Activated naive CD8-positive, alpha-beta T cell treated with anti-CD3 and anti-CD28 coated beads, Interleukin-2, amount 10 ng/mL, durations not matched to agents 7 days and 5 days (primary cell): ENCODE measurements at regions of chr16 and their contacts with region 1.

Region 1: DNA sequence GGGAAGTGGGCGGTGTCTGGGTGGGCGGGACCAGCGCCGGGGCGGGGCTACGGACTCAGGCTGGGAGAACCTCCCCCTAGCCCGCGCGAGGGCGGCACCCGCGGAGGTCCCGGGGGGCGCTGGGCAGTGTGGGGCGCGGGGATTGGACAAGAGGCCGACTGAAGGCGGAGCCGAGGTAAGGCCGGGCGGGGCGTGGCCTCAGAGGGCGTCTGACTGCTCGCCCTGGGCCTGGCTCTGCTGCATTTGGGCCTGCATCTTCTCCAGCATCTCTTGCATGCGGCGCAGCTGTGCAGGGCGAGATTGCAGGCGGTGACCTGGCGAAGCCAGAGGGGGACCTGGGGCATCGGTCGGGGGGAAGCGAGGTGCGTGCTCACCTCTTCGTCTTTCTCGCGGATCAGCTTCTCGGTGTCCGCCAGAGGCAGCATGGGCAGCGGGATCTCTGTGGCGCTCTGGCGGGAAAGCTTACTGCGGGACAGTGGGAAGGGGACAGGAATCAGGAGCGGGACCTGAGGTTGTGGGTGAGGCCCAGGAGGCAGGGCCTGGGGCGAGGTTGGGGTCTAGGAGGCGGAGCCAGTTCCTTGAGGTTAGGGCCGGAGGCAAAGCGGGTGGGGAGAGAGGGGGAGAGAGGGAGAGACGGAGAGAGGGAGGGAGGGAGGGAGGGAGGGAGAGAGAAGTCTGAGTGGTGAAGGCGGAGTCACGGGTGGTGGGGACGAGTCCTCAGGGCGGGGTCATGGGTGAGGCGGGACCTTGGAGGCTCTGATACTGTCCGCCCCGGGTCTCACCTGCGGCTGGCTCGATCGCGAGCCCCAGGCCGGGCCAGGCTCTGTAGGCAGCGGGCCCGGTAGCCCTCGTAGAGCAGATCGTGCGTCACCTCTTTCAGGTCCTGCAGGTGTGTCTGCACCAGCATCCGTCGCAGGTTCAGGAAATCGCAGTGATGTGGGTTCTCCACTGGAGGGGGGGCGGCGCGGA is 3.8 kb downstream of the SEPTIN1 start:
- DNase-seq: peak; percentile 99
- ATAC-seq: peak; percentile 80
- H3K4me3 Mint-ChIP-seq: peak overlapping the region; percentile 93
- H3K27ac Mint-ChIP-seq: peak overlapping the region; percentile 98
- H3K4me1 Mint-ChIP-seq: peaks cover 34% of the 10 kb centered on the region
- H3K27me3 Mint-ChIP-seq: no peaks in the 10 kb centered on the region

Region 2: DNA sequence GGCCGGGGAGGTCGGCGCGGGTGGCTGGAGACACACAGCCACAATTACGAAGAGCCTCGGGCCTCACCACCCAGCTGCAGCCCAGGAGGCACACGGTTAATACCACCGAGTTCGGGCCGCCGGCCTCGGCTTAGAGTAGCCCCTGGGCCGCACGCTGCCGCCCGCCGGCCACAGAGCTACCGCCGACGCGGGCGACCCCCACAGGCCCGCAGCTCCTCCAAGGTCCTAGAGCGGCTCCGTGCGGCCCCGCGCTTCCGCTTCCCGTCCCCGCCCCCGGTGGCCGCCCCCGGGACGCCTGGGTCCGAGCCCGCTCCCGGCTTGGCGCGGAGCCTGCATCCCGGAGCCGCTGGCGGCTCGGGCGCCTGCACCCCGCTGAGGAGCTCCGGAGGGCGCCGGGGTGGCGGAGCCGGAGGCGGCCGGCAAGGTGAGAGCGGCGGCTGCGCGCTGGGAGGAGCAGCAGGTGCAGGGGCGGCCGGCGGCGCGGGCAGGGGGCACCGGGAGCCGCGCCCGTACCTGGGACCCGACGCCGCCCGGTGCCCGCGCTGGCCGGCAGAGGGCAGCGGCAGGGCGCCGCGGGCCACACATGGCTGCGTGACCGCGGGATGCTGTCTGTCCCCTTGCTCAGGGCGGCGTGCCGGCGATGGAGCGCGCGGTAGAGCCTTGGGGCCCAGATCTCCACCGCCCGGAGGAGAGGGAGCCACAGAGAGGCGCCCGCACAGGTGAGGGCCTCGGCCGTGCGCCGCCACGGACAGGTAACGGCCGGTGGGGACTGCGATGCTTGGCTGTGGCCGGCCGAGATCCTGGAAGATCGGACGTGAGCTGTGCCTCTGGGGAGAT is 16.9 kb after region 1 on chr16 and contains the start of gene ZNF48:
- POLR2A ChIA-PET with region 1: interaction called, 74 read pairs
- DNase-seq: peak; percentile 79
- ATAC-seq: peak; percentile 75
- H3K4me3 Mint-ChIP-seq: peak within 1 kb of the TSS; percentile 94
- H3K27ac Mint-ChIP-seq: peak within 1 kb of the TSS; percentile 82
- H3K4me1 Mint-ChIP-seq: peaks cover 34% of the 10 kb centered on the region
- H3K27me3 Mint-ChIP-seq: no peaks in the 10 kb centered on the region
- total RNA-seq, gene ZNF48: 14.4 to 15.5 TPM

Region 3: DNA sequence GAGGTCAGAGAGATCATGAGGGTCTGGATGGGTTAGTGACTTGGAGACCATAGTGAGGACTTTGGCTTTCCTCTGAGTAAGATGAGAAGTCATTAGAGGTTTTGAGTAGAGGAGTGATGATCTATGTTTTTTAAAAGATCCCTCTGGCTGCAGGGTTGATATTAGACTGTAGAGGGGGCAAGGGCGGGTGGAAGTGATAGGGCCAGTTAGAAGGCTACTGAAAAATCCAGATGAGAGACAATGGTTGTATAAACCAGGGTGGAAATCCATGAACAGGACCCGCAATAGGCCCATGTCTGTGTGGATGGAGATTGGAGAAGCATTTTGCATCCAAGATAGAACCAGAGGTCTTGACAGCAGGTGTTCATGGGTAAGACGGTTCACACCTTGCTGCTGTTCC is 103.8 kb after region 1 on chr16:
- POLR2A ChIA-PET with region 1: no interaction called
- DNase-seq: no peak
- ATAC-seq: peak; percentile 39
- H3K4me3 Mint-ChIP-seq: peak overlapping the region; percentile 39
- H3K27ac Mint-ChIP-seq: peak overlapping the region; percentile 84
- H3K4me1 Mint-ChIP-seq: peaks cover 39% of the 10 kb centered on the region
- H3K27me3 Mint-ChIP-seq: no peaks in the 10 kb centered on the region